GM12878 (cell line): ENCODE measurements at regions of chr15 and their contacts with region 1.

Region 1: DNA sequence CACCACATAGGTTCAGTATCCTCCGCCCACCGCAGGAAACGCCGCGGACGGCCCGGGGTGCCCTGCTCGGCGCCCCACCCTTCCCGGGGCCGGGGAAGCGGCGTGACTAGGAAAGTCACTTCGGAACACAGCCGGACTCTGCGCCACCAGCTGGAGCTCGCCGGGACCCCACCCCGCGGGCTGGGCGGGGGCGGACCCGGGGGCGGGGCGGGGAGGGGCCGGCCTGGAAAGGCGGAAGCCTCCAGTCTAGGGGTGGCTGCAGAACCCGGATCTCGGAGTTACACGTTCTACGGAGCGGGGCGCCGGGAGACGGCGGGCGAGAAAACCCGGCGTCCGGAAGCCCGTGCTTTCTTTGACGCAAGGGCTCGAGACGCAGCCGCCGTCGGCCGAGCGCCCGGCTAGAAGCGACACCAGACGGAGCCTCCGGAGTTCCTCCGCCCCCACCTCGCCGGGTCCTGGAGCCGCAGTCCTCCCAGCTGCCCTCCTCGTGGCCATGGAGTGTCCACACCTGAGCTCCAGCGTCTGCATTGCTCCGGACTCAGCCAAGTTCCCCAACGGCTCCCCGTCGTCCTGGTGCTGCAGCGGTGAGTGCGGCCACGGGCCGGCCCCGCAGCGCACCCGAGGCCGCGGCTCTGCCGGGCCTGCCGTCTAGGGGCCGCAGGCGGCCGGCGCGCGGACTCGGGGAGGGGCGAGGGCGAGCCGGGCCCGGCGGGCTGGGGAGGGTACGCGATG is at the start of gene USP3:
- DNase-seq: no peak
- ATAC-seq: peak; percentile 72
- H3K4me3 ChIP-seq: peak within 1 kb of the TSS; percentile 96
- H3K27ac ChIP-seq: peak within 1 kb of the TSS; percentile 100
- H3K4me1 ChIP-seq: peaks cover 30% of the 10 kb centered on the region
- H3K27me3 ChIP-seq: no peaks in the 10 kb centered on the region
- CTCF ChIP-seq: peak in 2 of 3 experiments; percentile 30 to 39; a peak in 4 of 6 replicates
- EP300 ChIP-seq: peak in 1 of 2 experiments; percentile 50; a peak in 3 of 4 replicates
- POLR2A ChIP-seq: peak; percentile 85
- RAD21 ChIP-seq: peak; percentile 30
- polyA plus RNA-seq, gene USP3: 23.8 to 45.7 TPM

Region 2: GRCh38 chr15:63332367-63333124 is 171.9 kb before region 1 on chr15:
- CTCF ChIA-PET with region 1: no interaction called
- POLR2A ChIA-PET with region 1: no interaction called
- RAD21 ChIA-PET with region 1: no interaction called
- SMC1A ChIA-PET with region 1: no interaction called
- in situ Hi-C with region 1: no loop called
- intact Hi-C with region 1: no loop called
- DNase-seq: no peak
- ATAC-seq: no peak
- H3K4me3 ChIP-seq: no peak overlapping the region
- H3K27ac ChIP-seq: no peak overlapping the region
- H3K4me1 ChIP-seq: no peaks in the 10 kb centered on the region
- H3K27me3 ChIP-seq: no peaks in the 10 kb centered on the region
- CTCF ChIP-seq: no peak
- EP300 ChIP-seq: no peak
- POLR2A ChIP-seq: no peak
- RAD21 ChIP-seq: no peak

Region 3: GRCh38 chr15:63473999-63474809 is 30.2 kb before region 1 on chr15:
- CTCF ChIA-PET with region 1: interaction called, 28 read pairs
- POLR2A ChIA-PET with region 1: interaction called, 110 read pairs
- RAD21 ChIA-PET with region 1: interaction called, 197 read pairs
- SMC1A ChIA-PET with region 1: interaction called, 151 read pairs
- in situ Hi-C with region 1: no loop called
- intact Hi-C with region 1: loop called (anchors 1 kb)
- DNase-seq: peak; percentile 97
- ATAC-seq: peak; percentile 80
- H3K4me3 ChIP-seq: peak overlapping the region; percentile 59
- H3K27ac ChIP-seq: peak overlapping the region; percentile 100
- H3K4me1 ChIP-seq: peaks cover 62% of the 10 kb centered on the region
- H3K27me3 ChIP-seq: no peaks in the 10 kb centered on the region
- CTCF ChIP-seq: no peak
- EP300 ChIP-seq: peak; percentile 52 to 74; a peak in 2 of 4 replicates
- POLR2A ChIP-seq: no peak; the same call in 1 of the 2 replicates
- RAD21 ChIP-seq: peak; percentile 40; the same call in 1 of the 2 replicates

Region 4: DNA sequence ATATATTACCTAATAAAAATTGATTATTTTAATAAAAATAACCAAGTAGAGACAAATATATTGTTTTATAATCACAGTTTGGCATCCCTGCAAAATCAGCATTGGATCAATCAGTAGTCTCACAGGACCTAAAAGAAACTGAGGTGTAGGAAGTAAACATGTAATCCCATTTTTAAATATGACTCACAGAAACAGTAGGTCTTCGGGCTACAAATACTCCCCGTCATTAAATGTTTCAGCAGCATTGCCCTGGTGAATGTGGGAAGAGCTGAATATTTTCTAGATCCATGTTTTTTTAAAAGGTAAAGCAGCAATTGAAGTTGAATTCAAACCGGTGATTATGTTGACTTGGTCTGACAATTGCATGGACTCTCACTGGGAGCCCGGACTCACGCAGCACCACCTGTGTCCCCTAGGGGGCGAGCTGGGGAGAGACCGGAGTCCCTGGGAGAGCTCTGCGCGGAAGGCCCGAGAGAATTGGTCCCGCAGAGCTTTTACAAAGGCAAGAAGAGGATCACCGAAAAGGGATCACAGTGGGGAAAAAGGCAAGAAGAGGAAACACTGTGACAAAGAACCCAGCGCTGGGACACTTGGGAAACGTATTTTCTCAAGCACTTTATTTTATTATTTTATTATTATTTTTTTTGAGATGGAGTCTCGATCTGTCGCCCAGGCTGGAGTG is 17.2 kb before region 1 on chr15:
- CTCF ChIA-PET with region 1: interaction called, 81 read pairs
- POLR2A ChIA-PET with region 1: interaction called, 110 read pairs
- RAD21 ChIA-PET with region 1: interaction called, 144 read pairs
- SMC1A ChIA-PET with region 1: interaction called, 151 read pairs
- in situ Hi-C with region 1: no loop called
- intact Hi-C with region 1: loop called (anchors 1 kb)
- DNase-seq: no peak
- ATAC-seq: peak; percentile 74
- H3K4me3 ChIP-seq: peak overlapping the region; percentile 42; the same call in 1 of the 2 replicates
- H3K27ac ChIP-seq: peak overlapping the region; percentile 89
- H3K4me1 ChIP-seq: peaks cover 57% of the 10 kb centered on the region
- H3K27me3 ChIP-seq: no peaks in the 10 kb centered on the region
- CTCF ChIP-seq: peak; percentile 84 to 98 (median 97)
- EP300 ChIP-seq: no peak
- POLR2A ChIP-seq: no peak
- RAD21 ChIP-seq: peak; percentile 82

Region 5: GRCh38 chr15:63522225-63522578 is 17.8 kb after region 1 on chr15:
- CTCF ChIA-PET with region 1: interaction called, 17 read pairs
- POLR2A ChIA-PET with region 1: interaction called, 6 read pairs
- RAD21 ChIA-PET with region 1: interaction called, 12 read pairs
- SMC1A ChIA-PET with region 1: interaction called, 133 read pairs
- in situ Hi-C with region 1: no loop called
- intact Hi-C with region 1: no loop called
- DNase-seq: no peak
- ATAC-seq: no peak
- H3K4me3 ChIP-seq: no peak overlapping the region
- H3K27ac ChIP-seq: no peak overlapping the region
- H3K4me1 ChIP-seq: peaks cover 12% of the 10 kb centered on the region
- H3K27me3 ChIP-seq: no peaks in the 10 kb centered on the region
- CTCF ChIP-seq: no peak
- EP300 ChIP-seq: no peak
- POLR2A ChIP-seq: no peak
- RAD21 ChIP-seq: no peak

Region 6: DNA sequence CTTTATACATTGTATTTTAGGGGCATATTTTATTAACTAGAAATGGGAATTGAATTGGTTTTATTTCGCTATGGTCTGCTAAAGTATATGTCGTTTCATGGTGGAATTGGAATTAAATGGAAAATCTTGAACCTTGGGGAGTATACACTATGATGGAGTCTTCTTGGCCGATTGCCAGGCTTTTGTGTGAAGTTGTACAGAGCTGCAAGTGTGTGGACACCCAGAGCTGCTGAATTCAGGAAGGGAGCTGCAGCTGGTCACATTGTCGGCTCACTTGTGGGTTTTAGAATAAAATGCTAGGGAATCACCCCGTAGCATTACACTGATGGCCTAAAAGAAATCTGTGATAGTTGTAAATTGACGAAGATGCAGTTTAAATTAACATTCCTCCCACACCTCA is 35.1 kb after region 1 on chr15:
- CTCF ChIA-PET with region 1: interaction called, 52 read pairs
- POLR2A ChIA-PET with region 1: interaction called, 47 read pairs
- RAD21 ChIA-PET with region 1: interaction called, 75 read pairs
- SMC1A ChIA-PET with region 1: interaction called, 133 read pairs
- in situ Hi-C with region 1: no loop called
- intact Hi-C with region 1: loop called (anchors 5 kb)
- DNase-seq: no peak
- ATAC-seq: no peak
- H3K4me3 ChIP-seq: no peak overlapping the region
- H3K27ac ChIP-seq: no peak overlapping the region
- H3K4me1 ChIP-seq: peaks cover 35% of the 10 kb centered on the region
- H3K27me3 ChIP-seq: no peaks in the 10 kb centered on the region
- CTCF ChIP-seq: no peak
- EP300 ChIP-seq: no peak
- POLR2A ChIP-seq: no peak
- RAD21 ChIP-seq: no peak

Region 7: DNA sequence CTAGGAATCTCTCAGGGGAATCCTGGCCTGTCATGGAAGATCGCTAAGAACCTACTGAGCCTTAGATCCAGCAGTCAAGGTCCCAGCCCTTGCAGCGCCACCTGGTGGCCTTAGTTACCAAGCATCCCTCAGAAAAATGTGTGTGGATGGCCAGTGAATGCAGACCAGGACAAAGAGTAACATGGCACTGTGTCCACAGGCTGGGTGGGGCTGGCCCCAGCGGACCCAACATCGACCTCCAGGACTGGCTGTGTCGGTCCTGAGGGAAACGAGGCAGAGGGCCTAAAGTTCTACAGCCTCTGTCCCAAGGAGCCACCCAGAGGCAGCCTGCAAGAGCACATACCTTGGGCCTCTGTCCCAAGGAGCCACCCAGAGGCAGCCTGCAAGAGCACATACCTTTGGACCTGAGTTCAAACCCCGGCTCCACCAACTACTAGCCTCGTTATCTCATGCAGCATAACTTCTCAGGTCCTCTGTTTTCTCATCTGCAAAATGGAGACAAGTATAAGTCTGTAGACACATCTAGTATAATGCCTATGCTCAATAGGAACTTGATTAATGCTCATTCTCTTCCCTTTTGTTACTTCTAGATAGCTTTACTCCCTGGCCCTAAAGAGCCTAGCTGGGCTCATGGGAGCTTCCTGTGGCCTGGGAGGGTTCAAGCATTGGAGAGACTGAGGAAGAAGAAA is 386.8 kb after region 1 on chr15:
- CTCF ChIA-PET with region 1: interaction called, 3 read pairs
- POLR2A ChIA-PET with region 1: no interaction called
- RAD21 ChIA-PET with region 1: no interaction called
- SMC1A ChIA-PET with region 1: no interaction called
- in situ Hi-C with region 1: no loop called
- intact Hi-C with region 1: loop called (anchors 10 kb)
- DNase-seq: peak; percentile 72
- ATAC-seq: peak; percentile 67
- H3K4me3 ChIP-seq: no peak overlapping the region
- H3K27ac ChIP-seq: peak overlapping the region; percentile 79
- H3K4me1 ChIP-seq: peaks cover 62% of the 10 kb centered on the region
- H3K27me3 ChIP-seq: no peaks in the 10 kb centered on the region
- CTCF ChIP-seq: peak; percentile 80 to 88 (median 86)
- EP300 ChIP-seq: no peak
- POLR2A ChIP-seq: no peak
- RAD21 ChIP-seq: peak; percentile 88